IMR-90 (cell line): ENCODE measurements at regions of chr14 and their contacts with region 1.

Region 1: DNA sequence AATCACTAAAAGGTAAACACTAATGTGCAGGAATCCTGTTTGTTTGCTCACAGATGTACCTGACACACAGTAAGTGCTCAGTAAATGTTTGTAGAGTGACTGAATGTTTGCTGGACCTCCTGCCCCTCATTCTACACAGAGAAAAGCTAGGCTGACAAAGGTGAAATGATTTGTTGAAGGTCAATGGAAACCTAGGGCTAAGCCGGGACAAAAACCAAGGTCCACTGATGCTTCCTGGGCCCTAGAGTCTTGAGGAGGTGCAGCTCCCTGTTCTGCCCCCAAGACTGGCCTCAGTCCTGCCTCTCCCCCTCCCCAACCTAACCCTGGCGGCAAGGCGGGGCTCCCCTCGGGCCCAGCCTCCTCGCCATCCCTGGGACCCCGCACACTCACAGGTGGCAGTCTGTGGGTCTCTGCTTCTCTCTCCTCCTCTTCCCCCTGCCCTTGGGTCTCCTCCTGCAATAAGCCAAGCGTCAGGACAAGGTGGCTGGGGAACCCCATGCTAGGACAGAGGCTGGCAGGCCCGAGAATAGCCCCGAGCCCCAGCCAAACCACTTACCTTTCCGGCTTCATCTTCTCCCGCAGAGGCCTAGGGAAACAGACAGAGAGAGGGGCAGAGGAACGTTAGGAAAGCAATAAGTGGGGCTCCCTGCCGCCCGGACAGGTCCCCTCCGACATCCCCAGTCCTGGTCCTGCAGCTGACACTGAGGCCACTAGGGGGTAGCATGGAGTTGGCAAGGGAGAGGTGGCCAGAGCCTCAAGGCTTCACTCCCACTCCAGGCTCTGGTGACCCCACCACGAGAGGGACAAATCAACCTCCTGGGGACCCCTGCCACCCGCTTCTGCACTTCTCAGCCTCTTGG is 9.3 kb downstream of the PGF start:
- DNase-seq: peak; percentile 59
- ATAC-seq: peak; percentile 90
- H3K4me3 ChIP-seq: no peak overlapping the region
- H3K27ac ChIP-seq: no peak overlapping the region
- H3K4me1 ChIP-seq: peaks cover 13% of the 10 kb centered on the region
- H3K27me3 ChIP-seq: no peaks in the 10 kb centered on the region
- CTCF ChIP-seq: peak; percentile 90
- POLR2A ChIP-seq: peak; percentile 38; the same call in 1 of the 2 replicates
- RAD21 ChIP-seq: peak; percentile 84

Region 2: DNA sequence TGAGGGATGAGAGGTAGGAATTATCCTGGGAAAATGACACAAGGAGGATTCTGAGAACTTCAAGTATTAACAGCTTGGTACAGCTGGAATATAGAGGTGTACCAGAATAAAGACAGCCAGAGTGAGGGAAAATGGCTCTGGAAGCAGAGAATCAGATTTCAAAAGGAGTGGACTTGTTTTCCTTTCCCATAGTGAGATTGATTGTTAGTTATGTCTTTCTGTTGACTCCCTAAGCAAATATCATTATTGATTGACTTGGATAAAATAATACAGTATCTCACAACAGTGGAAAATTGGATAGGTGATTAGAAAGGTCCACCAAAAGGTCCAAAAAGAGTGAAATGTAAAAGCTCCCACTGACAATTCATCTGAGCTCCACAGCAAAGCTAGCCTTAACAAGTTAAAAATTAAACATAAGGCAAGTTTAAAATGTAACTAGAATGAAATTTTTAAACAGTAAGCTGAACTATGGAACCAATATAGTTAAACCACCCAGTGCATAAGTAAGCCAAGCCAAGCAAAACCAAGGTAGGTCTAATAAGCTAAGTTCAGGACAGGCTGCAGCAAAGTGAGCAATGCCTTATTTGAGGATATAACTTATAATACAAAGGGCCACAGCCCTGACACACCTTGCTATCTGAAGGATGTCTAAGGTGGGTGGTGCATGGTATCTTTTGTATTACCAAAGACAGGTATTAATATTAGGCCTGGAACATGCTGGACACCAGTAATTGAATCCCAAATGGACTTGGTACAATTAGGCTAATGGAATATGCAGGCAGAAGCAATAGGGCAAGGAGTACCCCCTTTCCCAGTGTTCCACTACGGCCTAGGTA is 948.7 kb before region 1 on chr14:
- CTCF ChIA-PET with region 1: no interaction called
- POLR2A ChIA-PET with region 1: no interaction called
- dilution Hi-C with region 1: no loop called
- in situ Hi-C with region 1: no loop called
- intact Hi-C with region 1: no loop called
- DNase-seq: no peak
- ATAC-seq: no peak
- H3K4me3 ChIP-seq: no peak overlapping the region
- H3K27ac ChIP-seq: no peak overlapping the region
- H3K4me1 ChIP-seq: no peaks in the 10 kb centered on the region
- H3K27me3 ChIP-seq: no peaks in the 10 kb centered on the region
- CTCF ChIP-seq: no peak
- POLR2A ChIP-seq: no peak
- RAD21 ChIP-seq: no peak

Region 3: DNA sequence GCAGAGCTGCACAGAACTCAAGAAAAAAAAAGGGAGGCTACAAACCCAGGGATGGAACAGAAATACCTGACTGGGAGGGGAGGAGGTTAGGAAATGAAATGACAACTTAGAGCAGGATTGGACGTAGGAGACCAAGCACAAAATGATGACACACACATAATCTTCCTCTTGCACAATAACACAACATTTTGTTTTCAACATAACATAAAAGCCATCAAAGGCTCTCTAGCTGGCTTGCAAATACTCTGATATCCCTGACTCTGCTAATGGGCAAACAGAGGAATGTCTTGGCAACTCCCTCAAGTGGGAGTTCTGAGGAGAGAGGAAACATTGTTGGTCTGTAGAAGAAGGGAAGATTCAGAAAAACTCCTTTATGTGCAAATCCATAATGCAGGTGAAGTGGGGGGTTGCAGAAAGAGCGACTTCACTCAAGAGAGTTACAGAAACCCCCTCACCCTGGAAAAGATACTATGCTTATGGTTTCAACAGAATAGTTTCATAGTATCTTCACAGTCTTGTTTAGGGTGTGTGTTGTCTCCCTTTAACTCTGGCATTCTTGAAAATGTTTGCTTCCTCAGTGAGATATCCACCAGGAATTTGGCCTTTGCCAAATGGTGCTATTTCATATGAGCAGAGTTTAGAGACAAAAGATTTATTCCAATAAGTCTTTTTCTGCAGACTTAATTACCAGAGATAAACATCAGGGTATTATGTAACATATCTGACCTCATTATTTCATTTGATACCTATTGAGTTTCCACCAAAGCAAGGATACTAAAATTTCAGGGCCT is 290.3 kb before region 1 on chr14:
- CTCF ChIA-PET with region 1: no interaction called
- POLR2A ChIA-PET with region 1: no interaction called
- dilution Hi-C with region 1: no loop called
- in situ Hi-C with region 1: no loop called
- intact Hi-C with region 1: no loop called
- DNase-seq: peak; percentile 61
- ATAC-seq: peak; percentile 77
- H3K4me3 ChIP-seq: no peak overlapping the region
- H3K27ac ChIP-seq: peak overlapping the region; percentile 70
- H3K4me1 ChIP-seq: peaks cover 39% of the 10 kb centered on the region
- H3K27me3 ChIP-seq: no peaks in the 10 kb centered on the region
- CTCF ChIP-seq: no peak
- POLR2A ChIP-seq: no peak
- RAD21 ChIP-seq: no peak; the same call in 1 of the 2 replicates

Region 4: GRCh38 chr14:74881431-74882361 is 64.4 kb before region 1 on chr14 and contains the start of gene DLST:
- CTCF ChIA-PET with region 1: no interaction called
- POLR2A ChIA-PET with region 1: no interaction called
- dilution Hi-C with region 1: no loop called
- in situ Hi-C with region 1: no loop called
- intact Hi-C with region 1: no loop called
- DNase-seq: peak; percentile 84
- ATAC-seq: peak; percentile 87
- H3K4me3 ChIP-seq: peak within 1 kb of the TSS; percentile 94
- H3K27ac ChIP-seq: peak within 1 kb of the TSS; percentile 89
- H3K4me1 ChIP-seq: peaks cover 22% of the 10 kb centered on the region
- H3K27me3 ChIP-seq: no peaks in the 10 kb centered on the region
- CTCF ChIP-seq: no peak
- POLR2A ChIP-seq: peak; percentile 93
- RAD21 ChIP-seq: no peak
- total RNA-seq, gene DLST: 58.6 and 63.0 TPM in 2 replicates

Region 5: DNA sequence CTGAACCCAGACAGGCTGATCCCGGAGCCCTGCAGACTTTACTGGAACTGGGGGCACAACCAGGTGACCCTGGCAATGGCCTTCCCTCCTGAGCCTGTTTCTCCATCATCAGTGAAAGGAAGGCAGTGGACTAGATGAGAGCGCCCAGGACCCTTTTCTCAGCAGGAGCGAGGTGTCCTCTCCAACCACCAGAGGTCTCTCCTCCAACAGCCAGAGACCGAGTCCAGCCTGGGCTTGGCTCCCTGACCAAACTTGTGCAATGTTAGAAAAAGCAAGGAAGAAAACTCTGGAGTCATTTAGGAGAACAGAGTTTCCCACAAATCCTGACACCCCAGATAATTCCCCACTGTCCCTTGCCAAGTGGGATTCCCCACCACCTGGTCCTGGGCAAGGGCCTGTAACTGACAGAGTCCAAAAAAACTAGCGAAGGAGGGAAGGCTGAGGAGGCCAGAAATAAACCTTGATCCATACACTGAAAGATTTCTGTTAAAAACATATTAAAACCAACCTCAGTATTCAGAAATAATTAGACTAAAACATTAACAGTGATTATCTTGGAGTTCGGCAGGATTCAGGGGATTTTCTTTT is 32.0 kb before region 1 on chr14:
- CTCF ChIA-PET with region 1: no interaction called
- POLR2A ChIA-PET with region 1: no interaction called
- dilution Hi-C with region 1: no loop called
- in situ Hi-C with region 1: no loop called
- intact Hi-C with region 1: loop called (anchors 1 kb)
- DNase-seq: peak; percentile 77
- ATAC-seq: peak; percentile 93
- H3K4me3 ChIP-seq: no peak overlapping the region
- H3K27ac ChIP-seq: no peak overlapping the region
- H3K4me1 ChIP-seq: peaks cover 1% of the 10 kb centered on the region; the same call in 1 of the 2 replicates
- H3K27me3 ChIP-seq: no peaks in the 10 kb centered on the region
- CTCF ChIP-seq: peak; percentile 90
- POLR2A ChIP-seq: no peak
- RAD21 ChIP-seq: peak; percentile 89

Region 6: GRCh38 chr14:75002392-75003249 is 56.6 kb after region 1 on chr14 and contains the start of gene EIF2B2:
- CTCF ChIA-PET with region 1: no interaction called
- POLR2A ChIA-PET with region 1: no interaction called
- dilution Hi-C with region 1: no loop called
- in situ Hi-C with region 1: no loop called
- intact Hi-C with region 1: loop called (anchors 2 kb)
- DNase-seq: peak; percentile 94
- ATAC-seq: peak; percentile 100
- H3K4me3 ChIP-seq: peak within 1 kb of the TSS; percentile 83
- H3K27ac ChIP-seq: peak within 1 kb of the TSS; percentile 95
- H3K4me1 ChIP-seq: peaks cover 4% of the 10 kb centered on the region
- H3K27me3 ChIP-seq: peaks cover 3% of the 10 kb centered on the region
- CTCF ChIP-seq: peak; percentile 24; the same call in 1 of the 2 replicates
- POLR2A ChIP-seq: peak; percentile 30; the same call in 1 of the 2 replicates
- RAD21 ChIP-seq: no peak
- total RNA-seq, gene EIF2B2: 69.4 and 70.1 TPM in 2 replicates

Region 7: DNA sequence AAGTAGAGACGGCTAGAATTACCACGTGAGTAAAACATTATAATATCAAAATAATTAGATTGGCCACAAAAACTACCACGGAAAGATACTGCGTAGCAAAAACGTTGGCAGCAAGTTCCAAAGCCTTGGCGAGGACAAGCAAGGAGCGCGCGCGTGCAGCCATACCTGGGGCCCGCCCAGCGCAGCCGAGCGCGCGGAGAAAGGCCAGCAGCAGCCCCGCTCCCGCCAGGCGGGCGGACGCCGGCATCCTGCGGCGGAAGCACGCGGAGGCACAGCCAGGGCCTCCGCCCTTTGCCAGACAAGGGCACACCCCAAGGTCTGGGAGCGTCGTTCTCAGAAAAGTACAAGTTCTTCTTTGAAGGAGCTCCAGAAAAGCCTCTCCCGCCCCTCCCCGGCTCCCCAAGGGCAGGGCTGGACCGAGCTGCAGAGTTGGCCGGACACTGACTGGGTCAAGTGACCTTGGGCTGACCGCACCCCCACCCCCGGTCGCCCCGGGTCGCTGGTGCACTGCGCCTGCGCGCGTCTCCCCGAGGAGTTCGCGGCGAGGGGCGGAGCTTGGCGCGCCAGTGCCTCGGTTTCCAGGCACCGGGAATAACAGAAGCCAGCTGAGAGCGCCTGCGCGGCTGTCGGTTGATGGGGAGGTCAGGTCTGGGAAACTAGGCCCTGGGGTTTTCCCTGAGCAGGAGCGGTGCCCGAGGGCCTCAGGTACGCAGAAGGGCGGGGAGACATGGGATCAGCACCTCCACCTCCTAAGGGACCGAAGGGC is 123.2 kb after region 1 on chr14 and contains the start of gene ZC2HC1C:
- CTCF ChIA-PET with region 1: interaction called, 4 read pairs
- POLR2A ChIA-PET with region 1: interaction called, 3 read pairs
- dilution Hi-C with region 1: no loop called
- in situ Hi-C with region 1: no loop called
- intact Hi-C with region 1: loop called (anchors 5 kb)
- DNase-seq: peak; percentile 67
- ATAC-seq: peak; percentile 93
- H3K4me3 ChIP-seq: peak within 1 kb of the TSS; percentile 52
- H3K27ac ChIP-seq: peak within 1 kb of the TSS; percentile 77
- H3K4me1 ChIP-seq: peaks cover 2% of the 10 kb centered on the region; the same call in 1 of the 2 replicates
- H3K27me3 ChIP-seq: no peaks in the 10 kb centered on the region
- CTCF ChIP-seq: no peak
- POLR2A ChIP-seq: no peak
- RAD21 ChIP-seq: no peak
- total RNA-seq, gene ZC2HC1C: 0.28 and 0.54 TPM in 2 replicates

Region 8: GRCh38 chr14:75088574-75089373 is 142.7 kb after region 1 on chr14:
- CTCF ChIA-PET with region 1: interaction called, 7 read pairs
- POLR2A ChIA-PET with region 1: no interaction called
- dilution Hi-C with region 1: no loop called
- in situ Hi-C with region 1: no loop called
- intact Hi-C with region 1: loop called (anchors 1 kb)
- DNase-seq: peak; percentile 65
- ATAC-seq: peak; percentile 79
- H3K4me3 ChIP-seq: no peak overlapping the region
- H3K27ac ChIP-seq: no peak overlapping the region
- H3K4me1 ChIP-seq: 0 out of 2 replicates have a peak, but pooled peaks cover 3% of the 10 kb centered on the region
- H3K27me3 ChIP-seq: no peaks in the 10 kb centered on the region
- CTCF ChIP-seq: peak; percentile 94
- POLR2A ChIP-seq: peak; percentile 56; the same call in 1 of the 2 replicates
- RAD21 ChIP-seq: peak; percentile 95

Region 9: DNA sequence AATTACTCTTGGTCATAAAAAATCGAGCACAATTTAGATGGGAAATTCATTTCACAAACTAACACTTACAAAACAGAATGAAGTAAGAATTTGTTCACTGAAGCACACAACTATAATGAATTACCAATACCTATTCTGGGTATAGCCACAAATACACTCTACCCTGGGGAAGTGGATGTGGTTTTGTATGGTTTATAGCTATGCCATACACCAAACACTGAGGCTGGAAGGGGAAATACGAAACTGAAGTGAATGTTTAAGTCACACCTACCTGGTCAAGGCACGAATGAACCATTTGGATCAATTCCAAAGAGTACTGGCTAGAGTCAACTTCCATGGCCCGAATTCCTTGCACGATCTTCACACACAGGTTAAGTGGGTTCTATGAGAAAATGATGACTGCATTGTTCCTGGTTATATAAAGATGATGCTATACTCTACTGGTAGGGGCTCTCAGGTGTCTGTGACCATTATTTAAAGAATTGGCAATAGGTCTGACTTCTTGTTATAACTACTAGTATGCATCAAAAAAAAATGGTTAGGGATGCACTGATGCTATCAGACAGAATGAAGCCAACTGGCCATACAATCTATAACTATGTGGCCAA is 168.0 kb after region 1 on chr14:
- CTCF ChIA-PET with region 1: no interaction called
- POLR2A ChIA-PET with region 1: no interaction called
- dilution Hi-C with region 1: no loop called
- in situ Hi-C with region 1: no loop called
- intact Hi-C with region 1: no loop called
- DNase-seq: no peak
- ATAC-seq: no peak
- H3K4me3 ChIP-seq: no peak overlapping the region
- H3K27ac ChIP-seq: no peak overlapping the region
- H3K4me1 ChIP-seq: 0 out of 2 replicates have a peak, but pooled peaks cover 1% of the 10 kb centered on the region
- H3K27me3 ChIP-seq: no peaks in the 10 kb centered on the region
- CTCF ChIP-seq: no peak
- POLR2A ChIP-seq: no peak
- RAD21 ChIP-seq: no peak